Right cardiac atrium (tissue), 5 donors: ENCODE measurements at regions of chr5 and their contacts with region 1.

Region 1: DNA sequence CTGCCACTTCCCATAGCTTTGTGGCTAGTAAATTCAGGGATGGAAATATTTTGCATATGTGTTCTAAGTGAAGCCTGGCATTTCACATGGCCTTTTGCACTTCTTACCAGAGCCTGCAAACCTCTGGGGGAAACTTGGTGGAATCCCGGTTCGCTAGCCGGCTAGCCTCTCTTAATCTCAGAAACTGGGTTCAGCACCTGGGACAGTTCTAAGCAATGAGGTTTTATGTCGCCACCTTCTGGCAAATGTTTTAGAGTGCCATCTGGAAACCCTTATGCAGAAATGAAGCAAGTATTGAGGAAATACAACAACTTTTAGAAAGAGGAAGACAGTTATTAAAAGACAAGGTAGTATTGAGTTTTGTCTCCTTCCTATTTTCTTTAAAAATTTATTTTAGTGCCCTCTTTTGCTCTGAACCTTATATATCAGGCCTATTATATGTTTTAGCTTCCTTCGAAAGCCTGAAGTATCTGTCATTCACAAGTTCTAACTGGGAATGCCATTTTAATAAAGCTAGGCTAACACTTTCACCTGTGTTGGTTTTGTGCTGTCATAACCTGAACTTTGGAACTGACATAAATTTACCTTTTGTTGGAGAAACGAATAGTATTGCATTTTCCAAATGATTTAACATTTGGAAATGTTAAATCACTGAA is 963 bp upstream of the HTR1A start:
- DNase-seq: peak in 1 of 3 donors; percentile 15
- ATAC-seq: peak; percentile 26 to 59
- H3K4me3 ChIP-seq: no peak overlapping the region
- H3K27ac ChIP-seq: no peak overlapping the region
- H3K4me1 ChIP-seq: no peaks in the 10 kb centered on the region
- H3K27me3 ChIP-seq: no peaks in the 10 kb centered on the region

Region 2: GRCh38 chr5:63401436-63402046 is 561.7 kb before region 1 on chr5:
- intact Hi-C with region 1: loop called (anchors 5 to 10 kb)
- DNase-seq: peak; percentile 34 to 66 (median 53)
- ATAC-seq: peak; percentile 65 to 76
- H3K4me3 ChIP-seq: no peak overlapping the region
- H3K27ac ChIP-seq: no peak overlapping the region
- H3K4me1 ChIP-seq: no peaks in the 10 kb centered on the region
- H3K27me3 ChIP-seq: no peaks in the 10 kb centered on the region

Region 3: GRCh38 chr5:63411936-63412335 is 551.3 kb before region 1 on chr5:
- intact Hi-C with region 1: loop called in 3 of 4 experiments (anchors 10 kb)
- DNase-seq: no peak
- ATAC-seq: no peak
- H3K4me3 ChIP-seq: no peak overlapping the region
- H3K27ac ChIP-seq: no peak overlapping the region
- H3K4me1 ChIP-seq: no peaks in the 10 kb centered on the region
- H3K27me3 ChIP-seq: no peaks in the 10 kb centered on the region

Region 4: GRCh38 chr5:64026493-64026892 is 63.3 kb after region 1 on chr5:
- intact Hi-C with region 1: no loop called
- DNase-seq: no peak
- ATAC-seq: no peak
- H3K4me3 ChIP-seq: no peak overlapping the region
- H3K27ac ChIP-seq: no peak overlapping the region
- H3K4me1 ChIP-seq: no peaks in the 10 kb centered on the region
- H3K27me3 ChIP-seq: peaks cover 2% of the 10 kb centered on the region